Mammary epithelial cell (primary cell): ENCODE measurements at regions of chr2 and their contacts with region 1.

Region 1: DNA sequence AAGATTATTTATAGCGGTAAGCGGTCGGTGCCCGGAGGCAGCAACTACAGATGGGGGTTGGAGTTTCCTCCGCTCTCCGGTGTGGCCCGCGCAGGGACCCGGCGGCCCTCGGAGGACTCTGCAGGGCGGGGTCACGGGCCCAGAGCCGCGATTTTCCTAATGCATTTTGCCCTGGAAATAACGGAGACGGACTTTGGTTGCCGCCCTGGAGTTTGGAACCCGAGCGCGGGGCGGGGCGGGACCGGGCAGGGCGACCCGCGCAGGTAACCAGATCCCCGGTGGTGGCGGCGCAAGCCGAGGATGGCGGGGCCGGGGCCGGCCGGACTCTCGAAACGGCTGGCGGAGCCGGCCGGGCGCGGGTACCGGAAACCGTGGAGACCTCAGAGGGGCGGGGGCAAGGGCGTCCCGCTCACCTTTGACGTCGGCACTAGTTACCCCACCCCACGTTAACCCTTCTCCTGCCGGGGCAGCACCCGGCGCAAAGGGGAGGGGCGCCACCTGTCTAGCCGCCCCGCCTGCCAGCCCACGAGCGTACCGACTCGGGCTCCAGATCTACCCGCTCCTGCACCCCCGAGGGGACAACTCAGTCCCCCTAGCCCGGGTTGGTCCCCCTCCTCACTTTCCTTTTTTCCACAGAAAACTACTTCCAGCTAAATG is 2.9 kb downstream of the CYP26B1 start:
- DNase-seq: peak; percentile 54
- H3K4me3 ChIP-seq: peak overlapping the region; percentile 41 to 73 (median 49)
- H3K27ac ChIP-seq: no peak overlapping the region
- H3K4me1 ChIP-seq: peaks cover 36% of the 10 kb centered on the region
- H3K27me3 ChIP-seq: peaks cover 19% of the 10 kb centered on the region
- CTCF ChIP-seq: no peak

Region 2: GRCh38 chr2:72115552-72116546 is 28.9 kb before region 1 on chr2:
- CTCF ChIA-PET with region 1: no interaction called
- dilution Hi-C with region 1: no loop called
- in situ Hi-C with region 1: no loop called
- intact Hi-C with region 1: loop called (anchors 2 kb)
- DNase-seq: peak; percentile 98
- H3K4me3 ChIP-seq: no peak overlapping the region
- H3K27ac ChIP-seq: peak overlapping the region; percentile 48
- H3K4me1 ChIP-seq: peaks cover 34% of the 10 kb centered on the region
- H3K27me3 ChIP-seq: no peaks in the 10 kb centered on the region
- CTCF ChIP-seq: peak; percentile 39 to 46

Region 3: DNA sequence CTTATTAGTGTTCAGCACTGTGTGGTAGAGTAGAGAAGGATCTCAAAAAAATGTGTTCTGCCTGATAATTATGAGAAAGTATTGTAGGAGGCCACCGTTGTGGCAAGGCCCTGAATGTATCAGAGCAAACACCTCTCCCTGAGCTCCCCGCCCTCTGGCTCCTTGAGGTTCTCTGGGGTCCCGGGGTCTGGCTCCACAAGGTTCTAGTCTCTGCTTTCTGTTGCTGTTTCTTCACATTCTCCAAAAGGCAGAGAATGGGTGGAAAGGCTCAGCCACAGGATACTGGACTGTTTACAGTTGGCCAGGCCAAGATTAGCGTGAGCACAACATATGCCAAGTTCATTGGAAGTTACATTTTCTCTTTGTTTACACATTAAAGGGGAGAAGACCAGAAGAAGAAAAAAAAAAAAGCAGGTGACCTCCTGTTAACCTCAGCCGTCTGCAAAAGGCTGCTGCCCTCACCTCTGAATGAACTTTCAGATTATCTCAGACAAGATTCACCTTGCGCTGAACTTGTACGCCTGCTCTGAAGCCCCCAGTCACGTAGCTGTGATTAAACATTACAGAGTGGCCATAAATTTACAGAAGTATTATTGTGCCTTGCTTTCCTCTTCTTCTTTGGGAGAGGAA is 59.5 kb after region 1 on chr2:
- CTCF ChIA-PET with region 1: no interaction called
- dilution Hi-C with region 1: no loop called
- in situ Hi-C with region 1: no loop called
- intact Hi-C with region 1: no loop called
- DNase-seq: no peak
- H3K4me3 ChIP-seq: no peak overlapping the region
- H3K27ac ChIP-seq: no peak overlapping the region
- H3K4me1 ChIP-seq: peaks cover 8% of the 10 kb centered on the region
- H3K27me3 ChIP-seq: no peaks in the 10 kb centered on the region
- CTCF ChIP-seq: no peak

Region 4: DNA sequence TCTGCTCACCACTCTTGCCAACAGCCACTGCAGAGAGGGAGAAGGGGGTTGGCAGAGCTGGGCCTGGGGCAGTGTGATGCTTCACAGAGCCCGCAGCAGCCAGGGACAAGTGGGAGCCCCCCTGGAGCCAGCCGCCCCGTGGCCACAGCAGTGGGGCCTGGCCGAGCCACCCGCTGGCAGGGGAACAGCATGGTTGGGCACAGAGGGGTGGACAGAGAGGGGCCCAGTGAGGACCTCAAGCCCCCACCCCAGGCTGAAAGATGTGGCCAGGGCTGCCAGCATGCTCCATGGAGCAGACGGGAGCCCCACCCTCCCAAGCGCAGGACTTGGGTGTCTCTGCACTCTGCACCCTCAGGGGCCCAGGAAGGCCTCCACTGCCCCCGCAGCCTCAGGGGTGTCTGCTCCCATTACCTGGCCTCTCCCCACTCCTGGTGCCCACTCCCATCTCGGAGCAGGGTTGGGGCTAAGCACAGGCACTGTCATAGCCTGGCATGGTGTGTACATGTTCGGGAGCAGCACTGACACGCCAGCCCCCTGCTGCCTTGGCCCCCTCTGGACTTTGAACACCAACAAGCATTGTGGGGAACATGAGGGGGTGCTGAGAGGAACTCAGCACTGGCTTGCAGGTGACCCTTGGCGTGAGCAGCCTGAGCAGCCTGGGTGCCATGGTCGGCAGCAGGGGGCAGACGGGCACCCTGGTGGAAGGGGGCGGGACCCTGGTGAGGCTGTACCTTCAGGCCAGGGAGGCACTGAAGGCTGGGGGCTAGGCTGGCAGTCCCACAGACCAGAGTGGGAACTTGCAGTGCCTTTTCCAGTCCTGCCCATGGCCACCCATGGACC is 282.5 kb after region 1 on chr2:
- CTCF ChIA-PET with region 1: no interaction called
- dilution Hi-C with region 1: no loop called
- in situ Hi-C with region 1: no loop called
- intact Hi-C with region 1: no loop called
- DNase-seq: no peak
- H3K4me3 ChIP-seq: no peak overlapping the region
- H3K27ac ChIP-seq: no peak overlapping the region
- H3K4me1 ChIP-seq: no peaks in the 10 kb centered on the region
- H3K27me3 ChIP-seq: no peaks in the 10 kb centered on the region
- CTCF ChIP-seq: no peak